Caco-2 (cell line): ENCODE measurements at regions of chr20 and their contacts with region 1.

Region 1: DNA sequence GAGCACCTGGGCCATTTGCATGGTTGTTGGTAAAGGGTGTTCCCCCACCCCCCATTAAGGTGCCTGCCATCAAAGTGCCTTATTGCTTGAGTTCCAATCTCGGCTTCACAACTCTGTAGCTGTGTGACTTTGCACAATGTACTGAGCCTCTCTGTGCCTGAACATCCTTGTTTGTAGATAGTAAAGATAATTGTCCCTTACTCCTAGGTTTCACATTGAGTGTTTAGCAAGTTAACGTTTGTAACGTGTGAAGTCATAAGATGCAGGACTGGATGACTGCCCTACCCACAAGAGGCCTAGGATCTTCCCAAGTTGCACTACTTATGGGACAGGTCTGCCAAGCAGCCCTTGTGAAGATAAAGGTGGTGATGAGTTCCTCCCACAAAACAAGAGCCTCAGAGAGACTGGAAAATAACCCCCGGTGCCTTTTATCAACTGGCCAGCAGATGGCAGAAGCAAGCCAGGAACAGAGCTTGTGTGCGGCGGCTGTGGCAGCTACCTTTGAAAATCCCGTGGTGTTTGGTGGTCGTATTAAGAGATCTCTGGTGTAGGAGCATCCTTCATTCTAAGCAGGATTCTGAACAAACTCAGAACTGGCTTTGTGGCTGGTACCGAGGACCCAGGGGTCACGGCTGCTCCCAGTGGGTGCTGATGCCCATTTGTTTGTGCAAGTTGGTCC is 99.0 kb downstream of the CDH26 start:
- DNase-seq: peak; percentile 80 to 86
- H3K4me3 ChIP-seq: no peak overlapping the region
- H3K4me3 Mint-ChIP-seq: no peak overlapping the region
- H3K27ac Mint-ChIP-seq: no peak overlapping the region
- H3K4me1 ChIP-seq: peaks cover 8% of the 10 kb centered on the region
- H3K4me1 Mint-ChIP-seq: peaks cover 9% of the 10 kb centered on the region
- H3K27me3 ChIP-seq: no peaks in the 10 kb centered on the region
- H3K27me3 Mint-ChIP-seq: no peaks in the 10 kb centered on the region
- CTCF ChIP-seq: peak; percentile 97 to 98

Region 2: DNA sequence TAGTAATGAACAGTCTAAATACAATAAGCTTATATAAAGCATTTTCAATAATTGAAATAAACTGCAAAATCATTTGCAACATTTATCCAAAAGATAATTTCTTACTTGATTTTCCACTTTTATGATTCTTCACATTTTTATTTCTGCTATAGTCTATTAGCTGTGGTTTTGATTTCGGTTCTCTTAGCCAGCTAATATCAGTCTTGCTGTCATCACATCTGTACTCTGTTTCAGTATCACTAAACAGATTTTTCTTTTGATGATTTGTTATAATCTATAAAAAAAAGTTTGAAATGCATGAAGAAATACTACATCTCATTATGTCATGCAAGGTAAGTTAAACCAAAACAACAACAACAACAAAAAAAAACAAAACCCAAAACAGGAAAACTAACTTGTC is 177.1 kb before region 1 on chr20:
- CTCF ChIA-PET with region 1: no interaction called
- POLR2A ChIA-PET with region 1: no interaction called
- intact Hi-C with region 1: no loop called
- DNase-seq: no peak
- H3K4me3 ChIP-seq: no peak overlapping the region
- H3K4me3 Mint-ChIP-seq: no peak overlapping the region
- H3K27ac Mint-ChIP-seq: no peak overlapping the region
- H3K4me1 ChIP-seq: no peaks in the 10 kb centered on the region
- H3K4me1 Mint-ChIP-seq: peaks cover 9% of the 10 kb centered on the region
- H3K27me3 ChIP-seq: no peaks in the 10 kb centered on the region
- H3K27me3 Mint-ChIP-seq: no peaks in the 10 kb centered on the region
- CTCF ChIP-seq: no peak

Region 3: DNA sequence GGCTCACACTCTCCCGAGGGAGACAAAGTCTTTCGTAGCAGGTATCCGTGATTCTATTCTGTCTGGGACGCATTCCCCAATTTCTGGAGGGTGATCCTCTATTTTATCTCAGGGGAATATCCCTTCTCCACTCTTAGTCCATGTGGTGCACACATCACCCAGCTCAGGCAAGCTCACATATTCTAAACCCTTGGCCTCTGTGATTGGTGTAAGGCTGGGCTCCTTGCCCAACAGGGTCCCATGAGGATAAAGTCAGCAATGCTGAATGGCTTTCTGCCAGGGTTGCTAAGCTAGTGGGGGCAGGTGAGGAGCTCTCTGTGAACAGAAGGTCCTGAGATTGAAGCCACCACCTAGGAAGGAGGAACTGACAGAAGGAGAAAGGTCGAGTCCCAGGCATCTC is 38.2 kb after region 1 on chr20:
- CTCF ChIA-PET with region 1: no interaction called
- POLR2A ChIA-PET with region 1: no interaction called
- intact Hi-C with region 1: no loop called
- DNase-seq: peak in 1 of 2 experiments; percentile 24
- H3K4me3 ChIP-seq: no peak overlapping the region
- H3K4me3 Mint-ChIP-seq: no peak overlapping the region
- H3K27ac Mint-ChIP-seq: no peak overlapping the region
- H3K4me1 ChIP-seq: no peaks in the 10 kb centered on the region
- H3K4me1 Mint-ChIP-seq: no peaks in the 10 kb centered on the region
- H3K27me3 ChIP-seq: peaks cover 1% of the 10 kb centered on the region; the same call in 1 of the 2 replicates
- H3K27me3 Mint-ChIP-seq: peaks cover 13% of the 10 kb centered on the region
- CTCF ChIP-seq: no peak

Region 4: GRCh38 chr20:60123652-60124051 is 66.4 kb after region 1 on chr20:
- CTCF ChIA-PET with region 1: interaction called, 14 read pairs
- POLR2A ChIA-PET with region 1: no interaction called
- intact Hi-C with region 1: no loop called
- DNase-seq: no peak
- H3K4me3 ChIP-seq: no peak overlapping the region
- H3K4me3 Mint-ChIP-seq: no peak overlapping the region
- H3K27ac Mint-ChIP-seq: no peak overlapping the region
- H3K4me1 ChIP-seq: no peaks in the 10 kb centered on the region
- H3K4me1 Mint-ChIP-seq: no peaks in the 10 kb centered on the region
- H3K27me3 ChIP-seq: peaks cover 3% of the 10 kb centered on the region
- H3K27me3 Mint-ChIP-seq: peaks cover 49% of the 10 kb centered on the region
- CTCF ChIP-seq: no peak

Region 5: DNA sequence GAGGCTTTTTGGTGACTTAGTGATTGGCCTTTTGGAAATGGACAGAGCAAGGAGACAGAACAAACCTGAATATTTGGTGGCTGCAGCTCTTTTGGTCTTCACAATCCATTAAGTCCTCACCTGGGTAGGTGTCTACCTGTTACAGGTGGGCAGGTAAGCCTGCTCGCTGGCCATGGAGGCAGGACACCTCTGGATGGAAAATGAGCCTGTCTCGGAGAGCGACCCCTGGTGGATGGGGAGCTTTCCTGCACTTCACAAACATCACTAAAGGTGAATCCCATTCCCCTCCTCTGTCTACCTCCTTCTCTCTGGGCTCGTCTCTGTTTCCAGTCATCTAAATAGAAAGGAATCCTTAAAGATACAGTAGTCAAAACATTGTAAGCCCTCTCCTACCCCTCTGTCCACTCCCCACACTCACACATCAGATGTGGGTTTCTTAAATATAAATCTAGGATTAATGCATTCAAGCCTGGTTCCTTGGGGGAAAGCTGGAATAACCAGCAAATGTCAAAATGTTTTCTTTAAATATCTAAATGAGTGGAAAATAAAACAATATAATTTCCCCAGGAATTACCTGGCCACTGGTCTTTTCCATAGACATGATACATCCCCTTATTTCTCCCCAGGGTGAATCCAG is 205.8 kb after region 1 on chr20:
- CTCF ChIA-PET with region 1: interaction called, 7 read pairs
- POLR2A ChIA-PET with region 1: no interaction called
- intact Hi-C with region 1: loop called (anchors 1 kb)
- DNase-seq: peak; percentile 65 to 73
- H3K4me3 ChIP-seq: no peak overlapping the region
- H3K4me3 Mint-ChIP-seq: no peak overlapping the region
- H3K27ac Mint-ChIP-seq: no peak overlapping the region
- H3K4me1 ChIP-seq: no peaks in the 10 kb centered on the region
- H3K4me1 Mint-ChIP-seq: no peaks in the 10 kb centered on the region
- H3K27me3 ChIP-seq: no peaks in the 10 kb centered on the region
- H3K27me3 Mint-ChIP-seq: peaks cover 22% of the 10 kb centered on the region
- CTCF ChIP-seq: peak; percentile 78 to 86

Region 6: DNA sequence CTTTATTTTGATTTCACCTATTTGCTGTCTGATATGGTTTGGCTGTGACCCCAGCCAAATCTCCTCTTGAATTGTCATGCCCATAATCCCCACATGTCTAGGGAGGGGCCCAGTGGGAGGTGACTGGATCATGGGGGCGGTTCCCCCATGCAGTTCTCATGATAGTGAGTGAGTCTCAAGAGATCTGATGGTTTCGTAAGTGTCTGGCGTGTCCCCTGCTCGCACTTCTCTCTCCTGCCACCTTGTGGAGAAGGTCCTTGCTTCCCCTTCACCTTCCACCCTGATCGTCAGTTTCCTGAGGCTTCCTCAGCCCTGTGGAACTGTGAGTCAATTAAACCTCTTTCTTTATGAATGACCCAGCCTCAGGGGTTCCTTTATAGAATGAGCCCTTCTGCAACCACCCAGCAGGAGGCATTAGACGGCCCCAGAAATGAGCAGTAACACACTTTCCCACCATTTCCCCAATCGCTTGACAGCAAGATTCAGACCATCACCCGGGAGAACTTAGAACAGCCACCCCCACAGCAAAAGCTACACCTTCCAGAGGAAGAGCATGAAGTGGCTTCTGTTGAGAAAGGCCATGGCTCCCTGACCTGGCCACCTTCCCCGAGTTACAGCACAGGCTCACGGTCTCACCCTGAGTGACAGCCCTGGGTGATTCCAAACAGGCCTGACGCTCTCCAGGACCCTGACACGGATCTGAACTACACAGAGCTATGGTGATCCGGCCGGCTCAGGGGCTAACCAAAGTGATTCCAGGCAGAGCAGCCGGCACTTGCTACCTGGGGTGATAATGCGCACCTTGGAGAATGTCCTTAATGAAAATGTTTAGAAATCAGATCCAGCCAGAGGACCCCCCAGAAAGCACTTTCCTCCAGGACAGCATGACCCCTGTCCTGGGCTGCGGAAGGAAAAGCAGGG is 1063.6 kb after region 1 on chr20:
- CTCF ChIA-PET with region 1: no interaction called
- POLR2A ChIA-PET with region 1: no interaction called
- intact Hi-C with region 1: loop called (anchors 2 kb)
- DNase-seq: peak; percentile 74 to 75
- H3K4me3 ChIP-seq: no peak overlapping the region
- H3K4me3 Mint-ChIP-seq: no peak overlapping the region
- H3K27ac Mint-ChIP-seq: no peak overlapping the region
- H3K4me1 ChIP-seq: no peaks in the 10 kb centered on the region; the same call in 1 of the 2 replicates
- H3K4me1 Mint-ChIP-seq: no peaks in the 10 kb centered on the region
- H3K27me3 ChIP-seq: no peaks in the 10 kb centered on the region
- H3K27me3 Mint-ChIP-seq: peaks cover 21% of the 10 kb centered on the region
- CTCF ChIP-seq: peak; percentile 50 to 58